K562 (cell line): ENCODE measurements at regions of chr15 and their contacts with region 1.

Region 1: DNA sequence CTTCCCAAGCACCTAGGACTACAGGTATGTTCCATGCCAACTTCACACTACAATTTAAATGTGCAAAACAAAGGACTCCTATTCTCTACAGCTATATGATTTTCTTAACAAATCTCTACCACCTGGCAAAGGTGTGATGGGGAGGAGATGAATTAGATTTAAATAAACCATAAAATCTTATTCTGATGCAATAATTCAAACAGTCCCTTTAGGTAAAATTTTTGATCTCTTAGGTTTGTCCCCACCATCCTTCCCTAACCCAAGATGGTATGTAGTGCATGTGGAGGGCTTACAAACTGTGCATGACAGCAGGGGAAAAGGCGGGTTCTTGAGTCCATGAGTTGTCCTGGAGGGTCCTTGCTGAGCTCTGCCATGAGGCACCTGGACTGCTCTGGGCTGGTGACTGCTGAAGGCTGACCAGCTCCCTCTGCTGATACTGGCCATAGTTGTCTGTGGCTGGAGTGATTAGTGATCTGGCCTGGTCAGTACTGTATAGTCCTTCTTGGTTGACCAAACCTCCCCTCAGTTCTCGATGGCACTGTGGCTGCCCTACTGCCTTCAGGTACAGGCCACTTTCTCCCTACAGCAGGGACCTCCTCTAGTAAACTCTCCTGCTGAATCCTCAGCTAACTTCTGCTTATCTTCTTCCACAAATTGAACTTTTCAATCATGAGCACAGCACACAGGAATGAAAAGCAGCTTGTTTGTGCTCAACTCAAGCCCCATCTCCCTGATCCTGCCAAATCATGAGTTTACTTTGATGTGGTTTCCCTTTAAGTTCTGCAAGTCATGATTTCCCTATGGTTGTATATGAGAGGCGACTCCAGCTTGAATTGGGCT is 30.1 kb downstream of the CFAP161 start:
- DNase-seq: peak; percentile 67 to 85 (median 76)
- ATAC-seq: peak; percentile 91
- H3K4me3 ChIP-seq: no peak overlapping the region
- H3K27ac ChIP-seq: peak overlapping the region; percentile 71
- H3K4me1 ChIP-seq: peaks cover 24 to 48% of the 10 kb centered on the region in 2 experiments
- H3K27me3 ChIP-seq: no peaks in the 10 kb centered on the region
- CTCF ChIP-seq: peak; percentile 47 to 62 (median 50)
- EP300 ChIP-seq: peak; percentile 64
- POLR2A ChIP-seq: no peak
- RAD21 ChIP-seq: peak in 1 of 2 experiments; percentile 59; a peak in 3 of 4 replicates

Region 2: DNA sequence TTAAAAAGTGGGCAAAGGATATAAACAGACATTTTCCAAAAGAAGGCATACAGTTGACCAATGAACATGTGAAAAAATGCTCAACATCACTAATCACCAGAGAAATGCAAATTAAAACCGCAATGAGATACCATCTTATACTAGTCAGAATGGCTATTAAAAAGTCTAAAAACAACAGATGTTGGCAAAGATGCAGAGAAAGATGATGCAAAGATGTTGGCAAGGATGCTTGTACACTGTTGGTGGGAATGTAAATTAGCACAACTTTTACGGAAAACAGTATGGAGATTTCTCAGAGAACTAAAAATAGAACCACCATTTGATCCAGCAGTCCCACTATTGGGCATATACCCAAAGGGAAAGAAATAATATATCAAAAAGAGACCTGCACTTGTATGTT is 109.9 kb before region 1 on chr15:
- CTCF ChIA-PET with region 1: no interaction called
- POLR2A ChIA-PET with region 1: no interaction called
- in situ Hi-C with region 1: no loop called
- intact Hi-C with region 1: no loop called
- DNase-seq: no peak
- ATAC-seq: no peak
- H3K4me3 ChIP-seq: no peak overlapping the region
- H3K27ac ChIP-seq: no peak overlapping the region
- H3K4me1 ChIP-seq: no peaks in the 10 kb centered on the region; a peak in 2 of 5 replicates
- H3K27me3 ChIP-seq: no peaks in the 10 kb centered on the region
- CTCF ChIP-seq: no peak
- EP300 ChIP-seq: no peak
- POLR2A ChIP-seq: no peak
- RAD21 ChIP-seq: no peak

Region 3: DNA sequence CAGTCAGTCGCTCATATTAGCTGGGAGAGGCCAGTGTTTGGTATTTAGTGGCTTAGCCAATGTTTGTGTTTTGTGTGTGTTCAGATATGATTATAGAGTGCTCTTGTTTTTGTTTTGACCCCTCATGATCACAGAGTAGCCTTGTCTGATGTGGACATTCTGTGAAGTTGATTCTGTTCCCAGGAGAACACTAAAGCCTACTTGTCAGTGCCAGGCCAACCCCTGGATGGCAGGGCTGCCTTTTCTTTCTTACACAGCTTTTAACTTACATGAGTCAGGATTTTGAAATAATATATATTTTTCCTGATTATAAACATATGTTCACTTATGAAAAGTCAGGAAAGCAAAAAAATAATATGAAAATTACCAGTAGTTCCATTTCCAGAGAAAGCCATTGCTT is 18.2 kb before region 1 on chr15:
- CTCF ChIA-PET with region 1: no interaction called
- POLR2A ChIA-PET with region 1: no interaction called
- in situ Hi-C with region 1: no loop called
- intact Hi-C with region 1: no loop called
- DNase-seq: no peak
- ATAC-seq: no peak
- H3K4me3 ChIP-seq: no peak overlapping the region
- H3K27ac ChIP-seq: no peak overlapping the region
- H3K4me1 ChIP-seq: peaks cover 0 to 4% of the 10 kb centered on the region in 2 experiments; a peak in 1 of 5 replicates
- H3K27me3 ChIP-seq: no peaks in the 10 kb centered on the region
- CTCF ChIP-seq: no peak
- EP300 ChIP-seq: no peak
- POLR2A ChIP-seq: no peak
- RAD21 ChIP-seq: no peak

Region 4: GRCh38 chr15:81178365-81178764 is 14.2 kb after region 1 on chr15:
- CTCF ChIA-PET with region 1: no interaction called
- POLR2A ChIA-PET with region 1: interaction called, 10 read pairs
- in situ Hi-C with region 1: no loop called
- intact Hi-C with region 1: no loop called
- DNase-seq: no peak
- ATAC-seq: no peak
- H3K4me3 ChIP-seq: no peak overlapping the region
- H3K27ac ChIP-seq: no peak overlapping the region
- H3K4me1 ChIP-seq: peaks cover 4% of the 10 kb centered on the region in 2 experiments; a peak in 4 of 5 replicates
- H3K27me3 ChIP-seq: no peaks in the 10 kb centered on the region
- CTCF ChIP-seq: no peak
- EP300 ChIP-seq: no peak
- POLR2A ChIP-seq: no peak
- RAD21 ChIP-seq: no peak